ENCODE measurements at regions of chrX and their contacts with region 1.

Region 1: DNA sequence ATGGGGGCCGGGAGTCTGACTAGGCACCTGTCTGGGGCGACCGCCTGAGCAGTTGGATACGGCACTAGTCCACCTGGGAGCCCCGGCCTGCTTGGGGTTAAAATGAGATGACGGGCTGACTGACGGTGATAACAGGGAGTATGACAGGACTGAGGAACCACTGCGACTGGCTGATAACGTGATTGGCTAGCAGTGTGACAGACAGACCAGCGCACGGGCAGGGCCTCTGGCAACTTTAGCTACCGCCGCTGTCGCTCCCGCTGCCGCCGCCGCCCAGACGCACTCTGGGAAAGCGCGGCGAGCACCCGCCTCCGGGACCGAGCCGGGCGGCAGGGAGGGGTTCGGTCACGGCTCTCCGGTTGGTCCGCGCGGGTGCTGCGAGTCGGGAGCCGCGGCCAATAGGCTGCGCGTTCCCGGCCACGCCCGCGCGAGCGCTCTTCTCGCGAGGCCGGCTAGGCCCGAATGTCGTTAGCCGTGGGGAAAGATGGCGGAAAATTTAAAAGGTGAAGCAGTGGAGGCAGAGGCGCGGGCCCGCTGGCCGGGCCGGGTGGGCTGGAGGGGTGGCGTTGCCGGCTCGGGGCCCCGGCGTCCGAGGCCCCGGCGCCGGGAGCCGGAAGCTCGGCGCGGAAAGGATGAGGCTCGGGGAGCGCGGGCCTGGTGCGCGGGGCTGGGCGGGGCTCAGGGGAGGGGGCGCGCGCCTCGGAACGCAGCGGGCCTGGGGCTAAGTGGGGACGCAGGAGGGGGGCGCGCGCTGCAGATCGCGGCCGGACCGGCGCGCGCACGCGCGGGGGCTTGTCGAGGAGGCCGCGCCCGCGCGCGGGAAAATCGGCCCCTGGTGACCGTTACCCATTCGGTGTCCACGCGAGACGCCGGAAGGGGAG is at the start of gene SUV39H1:
- DNase-seq: peak; percentile 76 to 90 (median 85)
- ATAC-seq: peak; percentile 97
- H3K4me3 ChIP-seq: peak within 1 kb of the TSS; percentile 62
- H3K4me3 Mint-ChIP-seq: peak within 1 kb of the TSS; percentile 86 to 95 (median 90)
- H3K27ac ChIP-seq: peak within 1 kb of the TSS; percentile 82
- H3K27ac Mint-ChIP-seq: peak within 1 kb of the TSS; percentile 91 to 96 (median 95)
- H3K4me1 ChIP-seq: peaks cover 0 to 13% of the 10 kb centered on the region in 2 donors
- H3K4me1 Mint-ChIP-seq: peaks cover 6 to 39% (median 28%) of the 10 kb centered on the region in 7 donors
- H3K27me3 ChIP-seq: no peaks in the 10 kb centered on the region
- H3K27me3 Mint-ChIP-seq: no peaks in the 10 kb centered on the region
- total RNA-seq, gene SUV39H1: 4.6 to 23.3 (median 8.6) TPM

Region 2: GRCh38 chrX:47836164-47837072 is 860.1 kb before region 1 on chrX and contains the start of gene ZNF81:
- CTCF ChIA-PET with region 1: no interaction called
- POLR2A ChIA-PET with region 1: no interaction called
- intact Hi-C with region 1: no loop called
- DNase-seq: peak; percentile 73 to 91 (median 83)
- ATAC-seq: peak; percentile 96
- H3K4me3 ChIP-seq: peak within 1 kb of the TSS; percentile 67
- H3K4me3 Mint-ChIP-seq: peak within 1 kb of the TSS; percentile 96 to 99 (median 98)
- H3K27ac ChIP-seq: peak within 1 kb of the TSS; percentile 79
- H3K27ac Mint-ChIP-seq: peak within 1 kb of the TSS; percentile 94 to 99 (median 97)
- H3K4me1 ChIP-seq: peaks cover 4 to 6% of the 10 kb centered on the region in 2 donors
- H3K4me1 Mint-ChIP-seq: peaks cover 1 to 36% (median 26%) of the 10 kb centered on the region in 7 donors
- H3K27me3 ChIP-seq: no peaks in the 10 kb centered on the region
- H3K27me3 Mint-ChIP-seq: no peaks in the 10 kb centered on the region
- total RNA-seq, gene ZNF81: 11.0 to 14.7 (median 11.7) TPM

Region 3: GRCh38 chrX:48589482-48590162 is 106.9 kb before region 1 on chrX:
- CTCF ChIA-PET with region 1: no interaction called
- POLR2A ChIA-PET with region 1: no interaction called
- intact Hi-C with region 1: no loop called
- DNase-seq: no peak
- ATAC-seq: no peak
- H3K4me3 ChIP-seq: no peak overlapping the region
- H3K4me3 Mint-ChIP-seq: no peak overlapping the region
- H3K27ac ChIP-seq: no peak overlapping the region
- H3K27ac Mint-ChIP-seq: no peak overlapping the region
- H3K4me1 ChIP-seq: no peaks in the 10 kb centered on the region
- H3K4me1 Mint-ChIP-seq: peaks cover 0 to 4% (median 0%) of the 10 kb centered on the region in 7 donors
- H3K27me3 ChIP-seq: no peaks in the 10 kb centered on the region
- H3K27me3 Mint-ChIP-seq: peaks cover 0 to 3% (median 0%) of the 10 kb centered on the region in 5 donors

Region 4: GRCh38 chrX:48676106-48676892 is 20.2 kb before region 1 on chrX:
- CTCF ChIA-PET with region 1: no interaction called
- POLR2A ChIA-PET with region 1: interaction called, 6 read pairs
- intact Hi-C with region 1: loop called (anchors 1 to 2 kb)
- DNase-seq: peak; percentile 74 to 89 (median 88)
- ATAC-seq: peak; percentile 98
- H3K4me3 ChIP-seq: peak overlapping the region; percentile 77
- H3K4me3 Mint-ChIP-seq: peak overlapping the region; percentile 88 to 94 (median 92)
- H3K27ac ChIP-seq: peak overlapping the region; percentile 90
- H3K27ac Mint-ChIP-seq: peak overlapping the region; percentile 82 to 95 (median 90)
- H3K4me1 ChIP-seq: no peaks in the 10 kb centered on the region
- H3K4me1 Mint-ChIP-seq: peaks cover 6 to 26% (median 22%) of the 10 kb centered on the region in 7 donors
- H3K27me3 ChIP-seq: no peaks in the 10 kb centered on the region
- H3K27me3 Mint-ChIP-seq: no peaks in the 10 kb centered on the region

Region 5: DNA sequence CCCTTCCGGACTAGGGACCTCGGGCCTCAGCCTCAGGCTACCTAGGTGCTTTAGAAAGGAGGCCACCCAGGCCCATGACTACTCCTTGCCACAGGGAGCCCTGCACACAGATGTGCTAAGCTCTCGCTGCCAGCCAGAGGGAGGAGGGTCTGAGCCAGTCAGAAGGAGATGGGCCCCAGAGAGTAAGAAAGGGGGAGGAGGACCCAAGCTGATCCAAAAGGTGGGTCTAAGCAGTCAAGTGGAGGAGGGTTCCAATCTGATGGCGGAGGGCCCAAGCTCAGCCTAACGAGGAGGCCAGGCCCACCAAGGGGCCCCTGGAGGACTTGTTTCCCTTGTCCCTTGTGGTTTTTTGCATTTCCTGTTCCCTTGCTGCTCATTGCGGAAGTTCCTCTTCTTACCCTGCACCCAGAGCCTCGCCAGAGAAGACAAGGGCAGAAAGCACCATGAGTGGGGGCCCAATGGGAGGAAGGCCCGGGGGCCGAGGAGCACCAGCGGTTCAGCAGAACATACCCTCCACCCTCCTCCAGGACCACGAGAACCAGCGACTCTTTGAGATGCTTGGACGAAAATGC is 13.0 kb before region 1 on chrX and contains the start of gene WAS:
- CTCF ChIA-PET with region 1: no interaction called
- POLR2A ChIA-PET with region 1: interaction called, 37 read pairs
- intact Hi-C with region 1: loop called (anchors 1 kb)
- DNase-seq: peak in 8 of 9 donors; percentile 35 to 63 (median 54)
- ATAC-seq: peak; percentile 85
- H3K4me3 ChIP-seq: peak within 1 kb of the TSS; percentile 82
- H3K4me3 Mint-ChIP-seq: peak within 1 kb of the TSS; percentile 84 to 98 (median 91)
- H3K27ac ChIP-seq: peak within 1 kb of the TSS; percentile 76
- H3K27ac Mint-ChIP-seq: peak within 1 kb of the TSS; percentile 87 to 97 (median 95)
- H3K4me1 ChIP-seq: peaks cover 25 to 36% of the 10 kb centered on the region in 2 donors
- H3K4me1 Mint-ChIP-seq: peaks cover 33 to 69% (median 54%) of the 10 kb centered on the region in 7 donors
- H3K27me3 ChIP-seq: no peaks in the 10 kb centered on the region
- H3K27me3 Mint-ChIP-seq: no peaks in the 10 kb centered on the region
- total RNA-seq, gene WAS: 92.2 to 164 (median 105) TPM